ENCODE measurements at regions of chr10 and their contacts with region 1.

Region 1: GRCh38 chr10:132223156-132223590 is 36.4 kb downstream of the DPYSL4 start:
- DNase-seq: peak; percentile 68 to 92 (median 85)

Region 2: GRCh38 chr10:131655101-131655849 is 567.9 kb before region 1 on chr10:
- intact Hi-C with region 1: no loop called
- DNase-seq: peak in 3 of 42 donors; percentile 13 to 55 (median 44)

Region 3: DNA sequence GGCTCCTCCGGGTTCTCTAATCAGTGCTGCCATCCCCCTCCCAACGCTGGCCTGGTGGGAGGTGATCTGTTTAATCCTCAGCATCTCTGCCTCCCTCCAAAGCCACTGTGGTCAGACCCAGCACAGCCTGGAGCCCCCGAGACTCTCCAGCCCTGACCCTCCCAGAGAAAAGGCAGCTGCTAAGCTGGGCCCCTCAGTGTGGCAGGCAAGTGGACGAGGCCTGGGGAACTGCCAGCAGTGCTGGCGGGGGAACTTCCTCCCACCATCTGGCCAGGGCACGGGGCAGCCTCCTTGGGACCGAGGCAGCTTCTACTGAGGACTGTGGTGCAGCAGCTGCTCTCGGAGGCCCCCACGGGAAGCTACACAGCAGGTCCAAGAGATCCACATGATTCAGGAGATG is 14.7 kb after region 1 on chr10:
- intact Hi-C with region 1: no loop called
- DNase-seq: peak in 9 of 42 donors; percentile 25 to 48 (median 33)

Region 4: DNA sequence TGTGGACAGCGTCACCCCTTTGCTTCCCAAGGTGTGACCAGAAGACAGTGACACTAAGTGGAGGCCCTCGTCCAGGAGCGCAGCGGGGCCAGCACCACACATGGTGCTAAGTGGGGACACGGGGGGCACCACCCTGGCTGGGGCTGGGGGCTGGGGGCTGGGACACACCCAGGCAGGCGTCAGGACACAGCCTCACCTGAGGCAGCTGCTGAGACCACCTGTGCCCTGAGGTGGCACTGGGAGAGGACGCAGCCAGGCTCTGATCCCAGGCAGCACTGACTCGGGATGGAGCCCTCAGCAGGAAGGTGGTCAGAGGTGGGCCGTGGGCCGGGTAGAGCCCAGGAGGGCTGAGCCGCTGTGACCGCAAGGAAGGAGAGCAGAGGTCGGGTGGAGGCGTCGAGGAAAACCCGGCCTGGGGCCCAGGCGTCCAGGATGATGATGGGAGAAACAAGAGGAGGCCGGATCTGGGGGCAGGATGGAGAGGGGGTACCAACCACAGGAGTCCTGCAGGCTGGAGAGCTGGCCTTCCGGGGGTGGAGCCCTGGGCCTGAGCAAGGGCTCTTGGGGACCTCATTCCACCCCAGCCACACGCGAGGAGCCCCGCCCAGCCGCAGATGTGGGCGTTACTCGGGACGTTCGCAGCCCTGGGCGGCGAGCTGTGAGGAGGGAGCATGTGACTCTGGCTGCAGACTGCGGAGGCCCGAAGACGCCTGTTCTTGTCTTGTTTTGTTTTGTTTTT is 131.4 kb after region 1 on chr10:
- intact Hi-C with region 1: loop called (anchors 5 kb)
- DNase-seq: peak in 1 of 42 donors; percentile 12